Activated T-helper 1 cell treated with anti-CD3 and anti-CD28 coated beads, Interleukin-12 subunit alpha, Interleukin-12 subunit beta, Interleukin-2, Interleukin-4 antibody, amounts not matched to agents 30 ng/mL and 10 ng/mL and 1 ng/mL, durations not matched to agents 14 hours and 24 hours and 36 hours (primary cell): ENCODE measurements at regions of chr17 and their contacts with region 1.

Region 1: DNA sequence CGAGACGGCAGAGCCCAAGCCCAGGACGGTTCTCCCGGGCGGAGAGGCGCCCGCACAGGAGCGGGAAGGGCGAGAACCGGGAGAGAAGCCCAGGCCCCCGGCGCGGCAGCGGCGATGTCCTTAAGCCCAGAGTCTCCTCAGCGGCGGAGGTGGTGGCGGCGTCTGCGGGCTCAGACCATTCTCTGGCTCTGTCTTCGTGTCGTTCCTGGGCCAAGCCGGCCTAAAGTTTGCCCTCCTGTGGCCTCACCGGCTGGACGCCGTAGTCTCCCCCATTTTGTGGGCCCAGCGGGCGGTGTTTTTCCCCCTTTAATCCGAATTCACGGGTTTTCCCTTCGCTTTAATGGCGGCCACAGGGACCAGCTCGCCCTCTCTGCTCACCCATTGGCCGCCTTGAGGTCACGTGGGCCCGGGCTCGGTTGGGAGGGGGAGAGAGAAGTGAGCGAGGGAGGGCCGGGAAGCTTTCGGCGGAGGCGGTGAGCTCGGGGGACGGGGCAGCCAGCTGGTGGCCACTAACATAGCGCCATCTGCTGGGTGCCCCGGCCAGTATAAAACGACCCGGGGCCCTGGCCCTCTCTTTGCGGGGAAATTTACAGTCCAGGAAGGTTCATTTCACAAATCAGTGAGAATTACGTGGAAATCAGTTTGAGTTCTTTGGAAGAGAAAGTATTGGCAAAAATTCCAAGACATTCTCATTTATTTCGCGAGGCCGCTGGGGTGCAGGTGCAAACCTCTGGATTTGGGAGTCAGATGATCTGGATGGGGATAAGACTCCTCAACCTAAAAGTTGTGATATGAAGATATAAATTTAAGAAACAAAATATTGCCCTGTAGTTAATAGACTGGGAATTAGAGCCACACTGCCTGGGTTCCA is 755 bp upstream of the MED13 start:
- DNase-seq: peak; percentile 97
- H3K4me3 Mint-ChIP-seq: peak overlapping the region; percentile 94
- H3K27ac Mint-ChIP-seq: peak overlapping the region; percentile 98
- H3K4me1 Mint-ChIP-seq: peaks cover 36% of the 10 kb centered on the region
- H3K27me3 Mint-ChIP-seq: no peaks in the 10 kb centered on the region

Region 2: GRCh38 chr17:60677308-60678124 is 1388.3 kb before region 1 on chr17 and contains the start of gene BCAS3:
- intact Hi-C with region 1: loop called (anchors 10 kb)
- DNase-seq: peak; percentile 97
- H3K4me3 Mint-ChIP-seq: peak within 1 kb of the TSS; percentile 89
- H3K27ac Mint-ChIP-seq: peak within 1 kb of the TSS; percentile 62
- H3K4me1 Mint-ChIP-seq: peaks cover 19% of the 10 kb centered on the region
- H3K27me3 Mint-ChIP-seq: no peaks in the 10 kb centered on the region
- total RNA-seq, gene BCAS3: 8.3 and 8.5 TPM in 2 replicates

Region 3: DNA sequence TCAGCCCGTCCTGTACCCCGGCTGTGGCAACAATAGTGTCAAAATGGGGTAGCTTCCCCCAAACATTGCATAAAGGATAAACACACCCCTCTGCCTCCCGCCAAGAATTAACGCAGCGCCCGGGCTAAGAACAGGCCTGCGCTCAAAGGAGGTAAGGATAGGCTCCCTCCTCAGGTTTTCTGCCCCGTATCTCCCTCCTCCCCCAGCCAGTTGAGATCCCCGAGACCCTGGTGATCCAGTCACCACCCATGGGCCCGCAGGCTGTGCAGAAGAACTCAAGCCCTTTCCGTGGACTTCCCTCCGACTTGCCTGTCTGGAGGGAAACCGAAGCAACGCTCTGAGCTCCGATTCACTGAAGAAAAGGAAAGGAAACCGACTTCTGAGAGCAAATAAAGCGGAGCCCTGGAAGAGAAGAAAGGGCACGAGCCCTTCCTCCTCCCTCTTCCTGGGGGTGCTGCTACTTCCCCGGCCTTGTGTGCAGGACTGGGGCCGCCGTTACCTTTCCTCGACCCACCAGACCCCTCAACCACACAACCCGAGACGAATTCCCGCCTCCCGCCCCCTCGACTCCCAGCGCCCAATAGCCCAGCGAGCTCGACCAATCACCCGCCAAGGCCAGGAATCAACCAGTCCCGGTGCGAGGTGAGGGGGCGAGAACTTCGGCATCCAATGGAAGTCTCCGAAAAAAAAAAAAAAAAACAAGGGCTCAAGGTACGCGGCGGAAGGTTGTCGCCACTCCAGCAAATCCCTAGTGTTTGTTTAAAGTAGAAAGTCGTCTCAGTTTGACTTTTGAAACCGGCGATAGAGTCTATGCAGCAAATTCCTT is 202.6 kb before region 1 on chr17 and contains the start of gene BRIP1:
- intact Hi-C with region 1: loop called (anchors 1 kb)
- DNase-seq: peak; percentile 86
- H3K4me3 Mint-ChIP-seq: peak within 1 kb of the TSS; percentile 91
- H3K27ac Mint-ChIP-seq: peak within 1 kb of the TSS; percentile 89
- H3K4me1 Mint-ChIP-seq: peaks cover 44% of the 10 kb centered on the region
- H3K27me3 Mint-ChIP-seq: no peaks in the 10 kb centered on the region
- total RNA-seq, gene BRIP1: 17.9 and 18.2 TPM in 2 replicates

Region 4: GRCh38 chr17:61955621-61956020 is 110.2 kb before region 1 on chr17:
- intact Hi-C with region 1: no loop called
- DNase-seq: no peak
- H3K4me3 Mint-ChIP-seq: no peak overlapping the region
- H3K27ac Mint-ChIP-seq: no peak overlapping the region
- H3K4me1 Mint-ChIP-seq: no peaks in the 10 kb centered on the region
- H3K27me3 Mint-ChIP-seq: no peaks in the 10 kb centered on the region

Region 5: GRCh38 chr17:61981323-61981722 is 84.5 kb before region 1 on chr17:
- intact Hi-C with region 1: loop called (anchors 5 kb)
- DNase-seq: no peak
- H3K4me3 Mint-ChIP-seq: no peak overlapping the region
- H3K27ac Mint-ChIP-seq: no peak overlapping the region
- H3K4me1 Mint-ChIP-seq: peaks cover 5% of the 10 kb centered on the region
- H3K27me3 Mint-ChIP-seq: no peaks in the 10 kb centered on the region

Region 6: GRCh38 chr17:61997664-61998063 is 68.2 kb before region 1 on chr17:
- intact Hi-C with region 1: no loop called
- DNase-seq: no peak
- H3K4me3 Mint-ChIP-seq: no peak overlapping the region
- H3K27ac Mint-ChIP-seq: no peak overlapping the region
- H3K4me1 Mint-ChIP-seq: peaks cover 6% of the 10 kb centered on the region
- H3K27me3 Mint-ChIP-seq: no peaks in the 10 kb centered on the region

Region 7: DNA sequence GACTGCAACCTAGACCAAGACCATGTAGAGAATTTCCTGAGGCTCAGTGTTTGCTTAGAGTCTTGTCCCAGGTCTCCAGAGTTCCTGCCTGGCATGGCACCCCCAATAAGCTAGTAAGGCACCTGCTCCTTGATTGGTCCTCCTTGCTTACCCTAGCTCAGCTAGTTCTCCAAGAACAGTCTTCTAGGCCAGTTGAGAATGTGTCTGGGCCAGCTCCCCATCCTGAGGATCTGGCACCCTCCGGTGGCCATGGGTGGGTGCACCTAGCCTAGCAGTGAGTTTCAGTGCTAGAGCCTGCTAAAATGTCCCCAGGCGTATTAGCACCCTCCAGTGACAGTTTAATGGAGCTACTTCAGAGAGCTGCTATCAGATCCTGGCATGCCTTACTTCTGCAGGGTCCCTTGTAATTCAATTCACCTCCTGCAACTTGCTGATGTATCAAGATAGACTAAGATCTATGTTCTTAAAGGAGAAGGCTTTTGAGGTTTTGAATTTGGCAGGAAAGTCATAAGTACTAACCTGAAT is 43.6 kb after region 1 on chr17:
- intact Hi-C with region 1: loop called (anchors 1 kb)
- DNase-seq: peak; percentile 39
- H3K4me3 Mint-ChIP-seq: no peak overlapping the region
- H3K27ac Mint-ChIP-seq: no peak overlapping the region
- H3K4me1 Mint-ChIP-seq: no peaks in the 10 kb centered on the region
- H3K27me3 Mint-ChIP-seq: peaks cover 4% of the 10 kb centered on the region

Region 8: DNA sequence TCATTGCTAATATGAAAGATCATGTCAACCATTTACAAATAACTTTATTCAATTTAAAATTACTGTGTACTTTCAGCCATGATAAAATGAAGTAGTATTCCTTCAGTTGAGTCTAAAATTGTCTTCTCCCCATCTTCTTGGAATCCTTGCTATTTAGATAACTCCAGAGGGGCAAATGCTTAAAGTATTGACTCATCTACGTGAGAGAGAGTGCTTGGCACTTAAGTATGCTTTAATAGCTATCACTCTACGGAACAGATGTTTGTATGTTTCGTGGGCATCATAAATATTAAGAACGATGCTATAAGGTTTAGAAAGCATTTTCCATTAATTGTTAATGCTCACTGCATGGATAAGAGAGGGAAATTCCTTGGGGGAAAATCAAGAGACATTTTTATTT is 68.6 kb after region 1 on chr17:
- intact Hi-C with region 1: no loop called
- DNase-seq: no peak
- H3K4me3 Mint-ChIP-seq: no peak overlapping the region
- H3K27ac Mint-ChIP-seq: no peak overlapping the region
- H3K4me1 Mint-ChIP-seq: no peaks in the 10 kb centered on the region
- H3K27me3 Mint-ChIP-seq: peaks cover 21% of the 10 kb centered on the region